CD4-positive, alpha-beta memory T cell (primary cell): ENCODE measurements at regions of chr13 and their contacts with region 1.

Region 1: GRCh38 chr13:28819735-28820098 is 422 bp upstream of the MTUS2 start:
- DNase-seq: peak in 4 of 5 donors; percentile 45 to 60 (median 50)
- H3K4me3 ChIP-seq: no peak overlapping the region
- H3K4me3 Mint-ChIP-seq: no peak overlapping the region
- H3K27ac ChIP-seq: no peak overlapping the region
- H3K27ac Mint-ChIP-seq: no peak overlapping the region
- H3K4me1 ChIP-seq: peaks cover 5% of the 10 kb centered on the region
- H3K4me1 Mint-ChIP-seq: peaks cover 2 to 7% (median 4%) of the 10 kb centered on the region in 4 donors
- H3K27me3 ChIP-seq: peaks cover 17% of the 10 kb centered on the region
- H3K27me3 Mint-ChIP-seq: peaks cover 36 to 43% of the 10 kb centered on the region in 2 donors

Region 2: DNA sequence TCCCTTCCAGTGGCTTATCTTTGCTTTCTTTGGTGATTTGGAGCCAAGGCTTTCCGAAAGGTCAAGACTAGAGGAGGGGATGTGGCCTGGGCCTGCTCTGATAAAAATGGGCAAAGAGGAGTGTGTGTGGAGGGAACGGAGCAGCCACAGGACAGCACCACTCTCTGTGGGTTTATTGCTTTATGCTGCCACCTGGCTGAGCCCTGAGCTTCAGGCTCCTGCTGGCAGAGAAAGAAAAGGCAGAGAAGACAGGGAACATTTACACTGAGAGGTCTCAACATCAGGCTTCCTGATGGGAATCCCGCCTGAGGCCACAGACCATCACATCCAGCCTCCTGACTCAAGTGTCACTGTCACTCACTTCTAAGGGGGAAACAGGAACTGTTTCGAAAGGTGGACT is 1036.6 kb before region 1 on chr13:
- CTCF ChIA-PET with region 1: no interaction called
- POLR2A ChIA-PET with region 1: no interaction called
- intact Hi-C with region 1: no loop called
- DNase-seq: no peak
- H3K4me3 ChIP-seq: no peak overlapping the region
- H3K4me3 Mint-ChIP-seq: no peak overlapping the region
- H3K27ac ChIP-seq: no peak overlapping the region
- H3K27ac Mint-ChIP-seq: no peak overlapping the region
- H3K4me1 ChIP-seq: no peaks in the 10 kb centered on the region
- H3K4me1 Mint-ChIP-seq: no peaks in the 10 kb centered on the region
- H3K27me3 ChIP-seq: no peaks in the 10 kb centered on the region
- H3K27me3 Mint-ChIP-seq: peaks cover 18 to 34% of the 10 kb centered on the region in 2 donors

Region 3: GRCh38 chr13:28714645-28715044 is 105.1 kb before region 1 on chr13:
- CTCF ChIA-PET with region 1: no interaction called
- POLR2A ChIA-PET with region 1: no interaction called
- intact Hi-C with region 1: no loop called
- DNase-seq: no peak
- H3K4me3 ChIP-seq: no peak overlapping the region
- H3K4me3 Mint-ChIP-seq: peak overlapping the region in 1 of 8 donors; percentile 38
- H3K27ac ChIP-seq: no peak overlapping the region
- H3K27ac Mint-ChIP-seq: peak overlapping the region in 1 of 7 donors; percentile 10
- H3K4me1 ChIP-seq: peaks cover 26% of the 10 kb centered on the region
- H3K4me1 Mint-ChIP-seq: peaks cover 23 to 46% (median 32%) of the 10 kb centered on the region in 4 donors
- H3K27me3 ChIP-seq: no peaks in the 10 kb centered on the region
- H3K27me3 Mint-ChIP-seq: no peaks in the 10 kb centered on the region

Region 4: DNA sequence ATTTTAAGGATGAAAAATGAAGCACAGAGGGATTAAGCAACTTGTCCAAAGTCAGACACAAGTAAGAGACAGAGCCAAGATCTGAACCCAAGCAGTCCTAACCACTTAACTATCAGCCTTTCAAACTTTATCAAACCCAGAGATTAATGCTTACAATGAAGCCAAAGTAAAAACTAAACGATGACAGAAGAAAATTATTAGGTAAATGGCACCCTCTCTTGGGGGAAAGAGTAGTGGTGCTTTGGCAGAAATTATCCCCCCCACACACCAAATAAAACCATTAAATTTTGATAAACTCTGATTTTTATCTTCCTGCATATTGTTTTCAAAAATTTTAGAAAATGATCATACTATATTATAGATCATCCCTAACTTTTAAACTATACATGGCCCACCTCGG is 446.5 kb after region 1 on chr13:
- CTCF ChIA-PET with region 1: no interaction called
- POLR2A ChIA-PET with region 1: no interaction called
- intact Hi-C with region 1: loop called (anchors 2 kb)
- DNase-seq: peak in 3 of 5 donors; percentile 1 to 4 (median 2)
- H3K4me3 ChIP-seq: no peak overlapping the region
- H3K4me3 Mint-ChIP-seq: no peak overlapping the region
- H3K27ac ChIP-seq: no peak overlapping the region
- H3K27ac Mint-ChIP-seq: no peak overlapping the region
- H3K4me1 ChIP-seq: no peaks in the 10 kb centered on the region
- H3K4me1 Mint-ChIP-seq: peaks cover 0 to 1% (median 0%) of the 10 kb centered on the region in 4 donors
- H3K27me3 ChIP-seq: no peaks in the 10 kb centered on the region
- H3K27me3 Mint-ChIP-seq: peaks cover 1 to 5% of the 10 kb centered on the region in 2 donors

Region 5: GRCh38 chr13:29369060-29369743 is 549.5 kb after region 1 on chr13:
- CTCF ChIA-PET with region 1: interaction called, 4 read pairs
- POLR2A ChIA-PET with region 1: no interaction called
- intact Hi-C with region 1: loop called (anchors 1 kb)
- DNase-seq: peak in 4 of 5 donors; percentile 1 to 31 (median 18)
- H3K4me3 ChIP-seq: no peak overlapping the region
- H3K4me3 Mint-ChIP-seq: no peak overlapping the region
- H3K27ac ChIP-seq: no peak overlapping the region
- H3K27ac Mint-ChIP-seq: no peak overlapping the region
- H3K4me1 ChIP-seq: no peaks in the 10 kb centered on the region
- H3K4me1 Mint-ChIP-seq: peaks cover 0 to 6% (median 0%) of the 10 kb centered on the region in 4 donors
- H3K27me3 ChIP-seq: no peaks in the 10 kb centered on the region
- H3K27me3 Mint-ChIP-seq: peaks cover 17 to 24% of the 10 kb centered on the region in 2 donors